ENCODE measurements at regions of chr17 and their contacts with region 1.

Region 1: DNA sequence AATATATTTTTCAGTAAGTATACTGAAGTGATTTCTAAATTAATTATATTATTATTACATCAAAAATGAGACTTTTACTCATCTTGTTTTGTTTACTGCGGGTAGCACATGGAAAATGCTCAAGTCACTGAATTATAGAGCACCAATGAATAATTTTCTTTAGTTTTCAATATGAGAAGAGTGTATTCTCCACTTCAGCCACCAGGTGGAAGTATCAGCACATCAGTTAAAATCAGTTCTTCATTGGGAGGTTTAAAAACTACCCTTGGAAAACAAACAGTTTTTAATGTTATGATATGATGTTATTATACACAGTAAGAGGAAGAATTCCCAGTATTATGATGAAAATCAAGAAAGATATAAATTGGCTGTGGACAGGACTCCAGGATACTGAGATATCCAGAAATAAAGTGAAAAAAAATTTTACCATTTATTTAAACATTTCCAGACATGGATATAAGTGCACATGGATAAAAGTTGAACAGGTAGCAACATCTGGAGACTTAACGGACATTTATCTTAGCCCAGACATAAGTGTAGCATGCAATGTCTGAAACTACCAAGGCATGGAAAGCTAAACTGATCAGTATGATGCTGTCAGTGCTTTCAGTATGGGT is 467.3 kb downstream of the KCNJ2 start:
- DNase-seq: no peak
- ATAC-seq: peak; percentile 33; the same call in 1 of the 3 replicates
- H3K4me3 ChIP-seq: no peak overlapping the region
- H3K27ac ChIP-seq: no peak overlapping the region
- H3K4me1 ChIP-seq: no peaks in the 10 kb centered on the region
- H3K27me3 ChIP-seq: no peaks in the 10 kb centered on the region
- CTCF ChIP-seq: peak; percentile 53 to 70 (median 56); a peak in 5 of 6 replicates
- EP300 ChIP-seq: no peak
- POLR2A ChIP-seq: no peak
- RAD21 ChIP-seq: peak; percentile 78

Region 2: DNA sequence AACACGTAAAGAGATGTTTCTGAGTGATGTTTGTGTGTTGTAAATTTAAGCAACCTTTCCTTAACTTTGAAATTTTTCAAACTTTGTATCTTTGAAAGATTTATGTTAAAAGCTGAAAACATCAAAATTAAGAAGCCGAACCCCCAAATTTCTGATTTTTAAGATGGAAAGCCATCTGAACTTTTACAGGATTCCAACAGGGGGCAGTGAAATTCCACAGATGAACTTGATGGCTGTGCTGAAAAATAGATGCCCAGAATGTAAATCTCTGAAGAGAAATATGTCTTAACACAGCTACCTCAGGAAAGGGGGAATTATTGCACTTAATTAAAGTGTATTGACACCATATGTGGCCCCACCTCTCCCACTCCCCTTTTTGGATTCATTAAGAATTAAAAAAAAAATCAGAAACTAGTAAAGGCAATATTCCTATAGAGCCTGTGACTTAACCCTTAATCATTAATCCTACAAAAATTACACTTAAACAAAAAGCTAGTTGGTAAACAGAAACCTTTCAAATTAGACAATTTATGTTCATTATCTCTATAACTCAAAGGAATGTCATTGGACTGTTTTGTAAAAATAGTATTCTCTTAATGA is 130.6 kb after region 1 on chr17:
- CTCF ChIA-PET with region 1: interaction called, 3 read pairs
- POLR2A ChIA-PET with region 1: no interaction called
- RAD21 ChIA-PET with region 1: no interaction called
- SMC1A ChIA-PET with region 1: no interaction called
- in situ Hi-C with region 1: no loop called
- intact Hi-C with region 1: loop called (anchors 5 kb)
- DNase-seq: no peak
- ATAC-seq: no peak
- H3K4me3 ChIP-seq: no peak overlapping the region
- H3K27ac ChIP-seq: no peak overlapping the region
- H3K4me1 ChIP-seq: no peaks in the 10 kb centered on the region
- H3K27me3 ChIP-seq: no peaks in the 10 kb centered on the region
- CTCF ChIP-seq: peak; percentile 43 to 55 (median 43)
- EP300 ChIP-seq: no peak
- POLR2A ChIP-seq: no peak
- RAD21 ChIP-seq: peak; percentile 81

Region 3: GRCh38 chr17:70901870-70902269 is 265.2 kb after region 1 on chr17:
- CTCF ChIA-PET with region 1: no interaction called
- POLR2A ChIA-PET with region 1: no interaction called
- RAD21 ChIA-PET with region 1: no interaction called
- SMC1A ChIA-PET with region 1: no interaction called
- in situ Hi-C with region 1: no loop called
- intact Hi-C with region 1: loop called (anchors 5 kb)
- DNase-seq: no peak
- ATAC-seq: no peak
- H3K4me3 ChIP-seq: no peak overlapping the region
- H3K27ac ChIP-seq: no peak overlapping the region
- H3K4me1 ChIP-seq: no peaks in the 10 kb centered on the region
- H3K27me3 ChIP-seq: no peaks in the 10 kb centered on the region
- CTCF ChIP-seq: no peak
- EP300 ChIP-seq: no peak
- POLR2A ChIP-seq: no peak
- RAD21 ChIP-seq: no peak

Region 4: GRCh38 chr17:71084219-71084618 is 447.6 kb after region 1 on chr17:
- CTCF ChIA-PET with region 1: interaction called, 3 read pairs
- POLR2A ChIA-PET with region 1: no interaction called
- RAD21 ChIA-PET with region 1: no interaction called
- SMC1A ChIA-PET with region 1: no interaction called
- in situ Hi-C with region 1: no loop called
- intact Hi-C with region 1: loop called (anchors 2 kb)
- DNase-seq: no peak
- ATAC-seq: peak; percentile 62
- H3K4me3 ChIP-seq: no peak overlapping the region
- H3K27ac ChIP-seq: no peak overlapping the region
- H3K4me1 ChIP-seq: no peaks in the 10 kb centered on the region
- H3K27me3 ChIP-seq: no peaks in the 10 kb centered on the region
- CTCF ChIP-seq: peak; percentile 18 to 35 (median 29); a peak in 3 of 6 replicates
- EP300 ChIP-seq: no peak
- POLR2A ChIP-seq: no peak
- RAD21 ChIP-seq: peak; percentile 48; the same call in 1 of the 2 replicates

Region 5: DNA sequence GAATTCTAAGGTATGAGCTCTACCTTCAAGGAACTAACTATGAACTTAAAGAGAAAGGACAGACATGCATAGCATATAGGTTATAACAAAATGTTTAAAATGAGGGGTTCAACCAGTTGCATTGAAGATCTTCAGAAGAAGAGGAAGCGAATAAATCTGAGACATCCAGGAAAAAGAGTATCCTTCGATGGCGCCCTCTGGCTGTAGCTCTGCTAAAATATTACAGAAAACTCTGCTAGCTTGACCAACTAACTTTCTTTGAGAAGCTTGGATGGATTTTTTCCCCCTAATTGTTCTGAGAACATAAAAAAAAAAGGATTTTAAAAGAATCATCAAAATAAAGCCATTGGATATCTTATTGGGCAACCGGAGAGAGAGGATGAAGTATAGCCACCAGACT is 824.3 kb after region 1 on chr17:
- CTCF ChIA-PET with region 1: no interaction called
- POLR2A ChIA-PET with region 1: no interaction called
- RAD21 ChIA-PET with region 1: no interaction called
- SMC1A ChIA-PET with region 1: no interaction called
- in situ Hi-C with region 1: no loop called
- intact Hi-C with region 1: loop called (anchors 5 kb)
- DNase-seq: no peak
- ATAC-seq: no peak
- H3K4me3 ChIP-seq: no peak overlapping the region
- H3K27ac ChIP-seq: no peak overlapping the region
- H3K4me1 ChIP-seq: no peaks in the 10 kb centered on the region
- H3K27me3 ChIP-seq: no peaks in the 10 kb centered on the region
- CTCF ChIP-seq: peak; percentile 7 to 26 (median 16); a peak in 3 of 6 replicates
- EP300 ChIP-seq: no peak
- POLR2A ChIP-seq: no peak
- RAD21 ChIP-seq: peak; percentile 13; the same call in 1 of the 2 replicates

Region 6: DNA sequence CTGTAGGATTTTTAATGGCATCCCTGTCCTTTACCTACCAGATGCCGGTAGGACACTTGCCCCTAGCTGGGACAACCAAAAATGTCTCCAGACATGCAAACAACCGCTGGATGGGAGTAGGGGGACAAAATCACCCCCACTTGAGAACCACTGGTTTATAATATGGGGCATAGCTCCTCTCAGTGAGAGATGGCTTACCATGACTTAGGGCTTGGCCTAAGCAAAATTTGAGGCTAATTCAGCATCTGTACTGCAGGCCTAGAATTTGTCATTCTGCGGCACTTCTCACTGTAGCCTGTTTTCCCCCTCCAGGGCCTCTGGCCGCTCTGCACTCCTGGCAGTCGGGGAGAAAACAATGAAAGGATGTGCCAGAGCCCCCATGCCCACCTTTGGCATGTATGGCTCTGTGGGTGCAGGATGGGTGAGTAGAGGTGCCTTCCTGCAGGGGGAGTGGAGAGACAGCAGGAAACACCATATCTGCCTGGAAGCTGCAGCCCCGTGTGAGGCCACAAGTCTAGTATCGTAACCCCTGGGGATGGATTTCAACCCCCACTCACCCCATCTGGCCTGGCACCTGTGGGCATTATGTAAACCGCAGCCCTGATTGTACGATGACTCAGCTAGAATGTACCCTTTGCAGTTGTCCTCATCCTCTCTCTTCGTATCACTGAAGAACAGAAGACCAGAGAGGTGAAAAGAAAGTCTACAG is 1752.3 kb after region 1 on chr17:
- CTCF ChIA-PET with region 1: no interaction called
- POLR2A ChIA-PET with region 1: no interaction called
- RAD21 ChIA-PET with region 1: no interaction called
- SMC1A ChIA-PET with region 1: no interaction called
- in situ Hi-C with region 1: loop called (anchors 25 kb)
- intact Hi-C with region 1: no loop called
- DNase-seq: peak; percentile 93
- ATAC-seq: peak; percentile 77
- H3K4me3 ChIP-seq: no peak overlapping the region
- H3K27ac ChIP-seq: 0 out of 2 replicates have a peak overlapping the region, but pooled peaks have one; percentile 14
- H3K4me1 ChIP-seq: peaks cover 40% of the 10 kb centered on the region
- H3K27me3 ChIP-seq: no peaks in the 10 kb centered on the region
- CTCF ChIP-seq: peak; percentile 41 to 64 (median 47); a peak in 5 of 6 replicates
- EP300 ChIP-seq: peak in 1 of 2 experiments; percentile 62; a peak in 1 of 4 replicates
- POLR2A ChIP-seq: no peak
- RAD21 ChIP-seq: peak; percentile 55; the same call in 1 of the 2 replicates